ENCODE measurements at regions of chr11 and their contacts with region 1.

Region 1: GRCh38 chr11:114280696-114281095 is 15.5 kb upstream of the NNMT start:
- DNase-seq: peak; percentile 44 to 66 (median 62)
- H3K4me3 ChIP-seq: no peak overlapping the region
- H3K27ac ChIP-seq: no peak overlapping the region
- H3K4me1 ChIP-seq: peaks cover 0 to 2% (median 0%) of the 10 kb centered on the region in 4 experiments
- H3K27me3 ChIP-seq: peaks cover 0 to 24% (median 12%) of the 10 kb centered on the region in 5 experiments

Region 2: DNA sequence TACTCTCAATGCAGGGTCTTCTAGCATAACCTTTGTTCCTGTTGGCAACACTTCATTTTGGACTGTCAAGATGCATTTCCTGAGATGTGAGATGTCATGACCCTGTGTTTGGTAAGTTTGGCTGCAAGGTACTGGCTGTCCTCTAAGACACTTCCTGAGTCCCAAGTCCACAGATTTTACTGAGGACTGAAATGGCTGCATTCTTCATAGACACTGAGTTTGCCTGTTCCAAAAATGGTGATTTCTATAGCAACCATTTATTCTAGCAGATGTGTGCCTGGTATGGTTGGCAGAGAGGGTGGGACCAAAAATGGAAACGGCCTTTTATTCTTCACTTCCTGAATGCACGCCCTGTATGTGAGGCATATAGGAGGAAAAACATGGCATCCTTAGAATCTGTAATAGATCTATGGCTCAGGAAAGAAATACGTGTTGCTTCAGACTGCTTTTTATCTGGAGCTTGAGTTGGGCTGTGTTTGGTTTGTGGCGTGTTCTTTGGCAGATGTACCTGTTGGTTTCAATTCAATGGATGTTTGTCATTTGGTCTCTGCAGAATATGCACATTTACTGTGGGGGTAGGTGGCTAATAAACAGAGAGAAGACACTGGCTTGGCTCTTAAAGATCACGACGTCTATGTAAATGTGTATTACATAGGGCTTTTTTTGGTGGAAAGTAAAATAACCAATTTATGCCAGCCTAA is 158.7 kb before region 1 on chr11:
- CTCF ChIA-PET with region 1: no interaction called
- POLR2A ChIA-PET with region 1: no interaction called
- DNase-seq: no peak
- H3K4me3 ChIP-seq: no peak overlapping the region
- H3K27ac ChIP-seq: no peak overlapping the region
- H3K4me1 ChIP-seq: peaks cover 0 to 19% (median 0%) of the 10 kb centered on the region in 4 experiments
- H3K27me3 ChIP-seq: no peaks in the 10 kb centered on the region

Region 3: GRCh38 chr11:114154271-114155047 is 126.2 kb before region 1 on chr11:
- CTCF ChIA-PET with region 1: no interaction called
- POLR2A ChIA-PET with region 1: no interaction called
- DNase-seq: no peak
- H3K4me3 ChIP-seq: no peak overlapping the region
- H3K27ac ChIP-seq: no peak overlapping the region
- H3K4me1 ChIP-seq: peaks cover 3 to 17% (median 13%) of the 10 kb centered on the region in 4 experiments
- H3K27me3 ChIP-seq: peaks cover 0 to 3% (median 0%) of the 10 kb centered on the region in 5 experiments

Region 4: GRCh38 chr11:114449845-114450244 is 169.1 kb after region 1 on chr11:
- CTCF ChIA-PET with region 1: no interaction called
- POLR2A ChIA-PET with region 1: no interaction called
- DNase-seq: peak in 2 of 3 donors; percentile 28 to 51
- H3K4me3 ChIP-seq: no peak overlapping the region
- H3K27ac ChIP-seq: no peak overlapping the region
- H3K4me1 ChIP-seq: no peaks in the 10 kb centered on the region
- H3K27me3 ChIP-seq: no peaks in the 10 kb centered on the region

Region 5: DNA sequence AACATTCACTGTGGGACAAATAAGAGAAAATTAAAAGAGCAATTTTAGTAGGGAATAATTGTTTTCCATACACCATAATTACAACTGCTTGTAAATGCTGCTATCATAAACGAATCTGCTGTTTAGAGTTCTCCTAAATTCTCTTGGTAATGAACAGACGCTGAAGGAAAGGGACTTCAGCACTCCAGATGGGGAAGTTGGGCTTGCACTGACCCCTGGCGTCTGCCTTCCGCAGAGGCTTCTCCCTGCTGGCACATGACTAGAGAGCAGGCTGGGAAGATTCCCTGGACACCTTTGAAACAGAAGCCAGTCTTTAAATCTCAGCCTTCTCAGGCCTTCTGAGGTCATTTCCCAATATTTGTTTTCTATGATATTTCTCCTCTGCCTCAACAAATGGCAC is 481.7 kb after region 1 on chr11:
- CTCF ChIA-PET with region 1: interaction called, 12 read pairs
- POLR2A ChIA-PET with region 1: no interaction called
- DNase-seq: peak; percentile 46 to 70 (median 64)
- H3K4me3 ChIP-seq: no peak overlapping the region
- H3K27ac ChIP-seq: no peak overlapping the region
- H3K4me1 ChIP-seq: no peaks in the 10 kb centered on the region
- H3K27me3 ChIP-seq: peaks cover 0 to 10% (median 0%) of the 10 kb centered on the region in 5 experiments

Measured in common myeloid progenitor, CD34-positive (primary cell).